K562 (cell line): ENCODE measurements at regions of chr13 and their contacts with region 1.

Region 1: DNA sequence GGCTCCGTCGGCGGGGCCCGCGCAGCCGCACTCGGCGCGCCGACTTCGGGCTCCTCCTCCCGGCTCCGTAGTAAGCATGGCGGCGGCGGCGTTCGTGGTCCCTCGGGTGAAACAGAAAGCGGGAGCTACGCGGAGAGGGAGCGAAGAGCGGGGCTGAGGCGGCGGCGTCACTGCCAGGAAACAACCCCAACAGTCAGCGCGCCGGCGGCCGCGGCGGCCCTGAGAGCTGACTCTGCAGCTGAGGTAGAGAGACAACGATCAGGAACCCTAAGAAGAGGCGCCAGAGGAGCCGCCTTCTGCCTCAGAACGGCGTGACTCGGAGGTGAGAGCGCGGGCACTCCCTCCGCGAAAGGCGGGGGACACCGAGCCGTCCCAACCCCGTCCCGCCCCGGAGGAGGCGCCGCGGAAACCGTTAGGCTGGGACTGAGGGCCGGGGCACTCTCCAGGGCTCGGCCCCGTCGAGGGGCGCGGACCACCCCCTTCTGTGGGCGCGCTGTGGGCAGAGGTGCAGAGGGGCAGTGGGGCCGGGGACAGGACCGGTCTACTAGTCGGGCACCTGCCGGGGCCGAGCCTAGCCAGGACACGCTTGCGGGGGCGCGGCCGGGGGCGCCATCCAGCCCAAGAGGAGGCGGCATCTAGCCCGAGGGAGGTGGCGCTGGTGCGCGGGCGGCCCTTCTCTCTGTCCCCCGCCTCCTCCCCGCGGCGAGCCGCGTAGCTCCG is at the start of gene FNDC3A:
- DNase-seq: peak; percentile 71 to 85 (median 77)
- ATAC-seq: peak; percentile 89
- H3K4me3 ChIP-seq: peak within 1 kb of the TSS; percentile 68
- H3K27ac ChIP-seq: peak within 1 kb of the TSS; percentile 95
- H3K4me1 ChIP-seq: peaks cover 4 to 8% of the 10 kb centered on the region in 2 experiments; a peak in 2 of 5 replicates
- H3K27me3 ChIP-seq: no peaks in the 10 kb centered on the region
- CTCF ChIP-seq: peak in 1 of 3 experiments; percentile 16; a peak in 1 of 6 replicates
- EP300 ChIP-seq: no peak
- POLR2A ChIP-seq: peak; percentile 85
- RAD21 ChIP-seq: no peak; a peak in 1 of 4 replicates
- polyA plus RNA-seq, gene FNDC3A: 4.1 to 5.9 TPM

Region 2: DNA sequence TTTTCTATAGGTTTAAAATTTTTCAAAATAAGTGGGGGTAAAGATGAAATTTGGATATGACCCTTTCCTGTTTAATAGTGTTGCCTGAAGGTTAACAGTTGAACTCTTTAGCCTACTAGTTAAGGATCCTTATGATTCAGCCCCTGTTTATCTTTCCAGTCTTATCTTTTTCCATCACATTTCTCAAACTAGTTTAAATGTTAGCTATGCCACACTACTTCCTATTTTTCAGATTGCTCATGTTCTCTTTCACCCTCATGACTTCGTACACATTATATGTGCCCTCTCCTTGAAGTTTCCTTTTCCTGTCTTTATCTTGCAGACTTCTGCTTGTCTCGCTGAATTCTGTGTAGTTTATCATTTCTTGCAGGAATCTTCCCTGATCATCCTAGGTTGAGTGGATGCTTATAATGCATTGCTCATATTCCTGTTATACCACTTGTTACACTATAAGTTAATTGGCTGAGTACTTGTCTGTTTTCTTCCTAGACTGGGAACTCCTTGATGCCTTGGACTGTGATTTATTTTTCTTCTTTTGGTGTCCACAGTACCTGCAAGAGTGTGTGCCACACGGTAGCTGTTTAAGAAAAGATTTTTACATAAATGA is 86.4 kb after region 1 on chr13:
- CTCF ChIA-PET with region 1: no interaction called
- POLR2A ChIA-PET with region 1: no interaction called
- in situ Hi-C with region 1: no loop called
- intact Hi-C with region 1: loop called (anchors 5 kb)
- DNase-seq: peak in 2 of 4 experiments; percentile 14 to 30
- ATAC-seq: peak; percentile 50; the same call in 2 of the 3 replicates
- H3K4me3 ChIP-seq: no peak overlapping the region
- H3K27ac ChIP-seq: peak overlapping the region; percentile 35; the same call in 1 of the 3 replicates
- H3K4me1 ChIP-seq: peaks cover 0 to 9% of the 10 kb centered on the region in 2 experiments; a peak in 2 of 5 replicates
- H3K27me3 ChIP-seq: no peaks in the 10 kb centered on the region
- CTCF ChIP-seq: no peak
- EP300 ChIP-seq: 0 out of 2 replicates have a peak, but pooled peaks have one; percentile 17
- POLR2A ChIP-seq: no peak
- RAD21 ChIP-seq: no peak